Right ventricle myocardium inferior (tissue), 1 donor: ENCODE measurements at regions of chr11 and their contacts with region 1.

Region 1: DNA sequence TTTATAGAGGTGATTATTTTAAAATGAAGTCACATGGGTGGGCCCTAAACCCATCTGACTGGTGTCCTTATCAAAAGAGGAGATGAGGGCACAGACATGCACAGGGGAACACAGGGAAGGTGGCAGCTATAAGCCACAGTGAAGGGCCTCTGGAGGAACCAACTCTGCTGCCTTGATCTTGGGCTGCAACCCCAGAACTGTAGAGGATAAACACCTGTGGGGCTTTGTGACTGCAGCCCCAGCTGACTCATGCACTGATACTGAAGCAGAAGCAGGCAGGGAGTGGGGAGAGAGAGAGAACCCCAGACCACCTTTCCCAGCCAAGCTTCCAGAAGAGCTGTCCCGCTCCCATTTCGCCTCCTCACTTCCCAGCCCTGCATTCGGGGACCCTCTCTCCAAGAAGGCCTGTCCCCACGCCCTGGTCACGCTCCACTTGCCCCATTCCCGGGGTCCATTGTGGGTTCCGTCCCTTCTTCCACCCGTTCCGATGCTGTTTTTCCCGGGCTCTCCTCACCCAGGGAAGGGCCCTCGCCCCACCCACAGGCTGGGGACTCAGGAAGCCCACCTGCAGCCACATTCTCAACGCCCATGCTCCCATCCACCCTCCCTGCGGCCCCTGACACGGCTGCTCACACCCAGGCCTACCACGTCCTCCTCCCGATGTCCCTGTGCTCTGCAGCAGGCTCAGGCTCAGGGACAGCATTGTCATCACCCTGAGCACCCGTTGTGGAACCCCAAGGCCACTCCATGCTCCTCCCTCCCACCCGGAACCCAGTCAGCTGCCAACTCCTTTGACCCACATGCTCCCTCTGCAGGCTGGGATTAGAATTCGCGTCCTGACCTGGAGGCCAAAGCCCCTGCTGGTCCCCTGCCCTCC is 90.8 kb upstream of the SHANK2 start:
- DNase-seq: no peak
- ATAC-seq: no peak

Region 2: DNA sequence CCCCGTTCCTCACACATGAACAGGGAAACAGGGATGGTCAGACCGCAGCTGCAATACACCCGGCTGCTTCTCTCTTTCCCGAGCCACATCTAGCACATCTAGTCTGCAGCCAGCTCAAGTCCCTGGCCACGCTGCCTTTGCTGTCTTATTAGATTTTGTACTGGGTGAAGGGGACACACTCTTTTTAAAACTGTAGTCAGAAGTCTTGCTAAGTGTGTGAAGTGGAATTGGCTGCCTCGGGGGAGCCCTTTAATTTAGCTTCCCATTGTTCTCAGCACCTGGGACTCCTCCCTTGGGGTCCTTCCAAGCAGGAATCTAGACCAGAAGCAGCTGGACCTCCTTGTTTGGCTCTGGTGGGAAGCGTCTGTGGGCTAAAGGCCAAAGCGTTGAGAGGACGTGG is 524.8 kb before region 1 on chr11:
- intact Hi-C with region 1: loop called (anchors 5 kb)
- DNase-seq: no peak
- ATAC-seq: no peak

Region 3: GRCh38 chr11:71998662-71999310 is 655.6 kb after region 1 on chr11 and contains the start of gene IL18BP:
- intact Hi-C with region 1: no loop called
- DNase-seq: no peak
- ATAC-seq: no peak
- total RNA-seq, gene IL18BP: 5.1 TPM